Endothelial cell of umbilical vein (primary cell): ENCODE measurements at regions of chr16 and their contacts with region 1.

Region 1: DNA sequence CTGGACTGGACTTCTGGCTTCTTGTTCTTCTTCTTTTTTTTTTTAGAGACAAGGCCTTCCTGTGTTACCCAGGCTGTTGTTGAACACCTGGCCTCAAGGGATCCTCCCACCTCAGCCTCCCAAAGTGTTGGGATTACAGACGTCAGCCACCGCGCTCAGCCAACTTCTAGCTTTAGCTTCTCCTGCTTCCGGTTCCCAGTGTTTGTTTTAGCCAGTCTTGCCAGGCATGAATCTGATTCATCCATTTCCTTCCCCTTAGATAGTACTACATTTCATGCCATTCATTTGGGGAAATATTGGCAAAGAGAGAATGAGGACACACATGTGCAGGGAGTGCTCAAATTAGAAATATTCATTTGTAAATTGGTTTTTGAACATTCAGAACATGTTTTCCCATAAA is 12.1 kb upstream of the NDUFAB1 start:
- DNase-seq: peak; percentile 93
- H3K4me3 ChIP-seq: peak overlapping the region in 1 of 3 experiments; percentile 28
- H3K27ac ChIP-seq: peak overlapping the region; percentile 96
- H3K4me1 ChIP-seq: peaks cover 13% of the 10 kb centered on the region
- H3K27me3 ChIP-seq: no peaks in the 10 kb centered on the region
- CTCF ChIP-seq: no peak
- POLR2A ChIP-seq: peak; percentile 38

Region 2: GRCh38 chr16:23504451-23505179 is 103.6 kb before region 1 on chr16:
- CTCF ChIA-PET with region 1: no interaction called
- POLR2A ChIA-PET with region 1: no interaction called
- dilution Hi-C with region 1: no loop called
- intact Hi-C with region 1: no loop called
- DNase-seq: peak; percentile 87
- H3K4me3 ChIP-seq: no peak overlapping the region
- H3K27ac ChIP-seq: peak overlapping the region; percentile 64
- H3K4me1 ChIP-seq: peaks cover 20% of the 10 kb centered on the region
- H3K27me3 ChIP-seq: no peaks in the 10 kb centered on the region
- CTCF ChIP-seq: no peak
- POLR2A ChIP-seq: no peak

Region 3: GRCh38 chr16:23595951-23596720 is 12.1 kb before region 1 on chr16 and contains the start of gene NDUFAB1:
- CTCF ChIA-PET with region 1: interaction called, 12 read pairs
- POLR2A ChIA-PET with region 1: no interaction called
- dilution Hi-C with region 1: no loop called
- intact Hi-C with region 1: loop called (anchors 1 kb)
- DNase-seq: peak; percentile 90
- H3K4me3 ChIP-seq: peak within 1 kb of the TSS; percentile 77 to 89 (median 87)
- H3K27ac ChIP-seq: peak within 1 kb of the TSS; percentile 59
- H3K4me1 ChIP-seq: peaks cover 7% of the 10 kb centered on the region
- H3K27me3 ChIP-seq: no peaks in the 10 kb centered on the region
- CTCF ChIP-seq: peak; percentile 91 to 99
- POLR2A ChIP-seq: peak; percentile 83
- total RNA-seq, gene NDUFAB1: 109 and 112 TPM in 2 replicates

Region 4: DNA sequence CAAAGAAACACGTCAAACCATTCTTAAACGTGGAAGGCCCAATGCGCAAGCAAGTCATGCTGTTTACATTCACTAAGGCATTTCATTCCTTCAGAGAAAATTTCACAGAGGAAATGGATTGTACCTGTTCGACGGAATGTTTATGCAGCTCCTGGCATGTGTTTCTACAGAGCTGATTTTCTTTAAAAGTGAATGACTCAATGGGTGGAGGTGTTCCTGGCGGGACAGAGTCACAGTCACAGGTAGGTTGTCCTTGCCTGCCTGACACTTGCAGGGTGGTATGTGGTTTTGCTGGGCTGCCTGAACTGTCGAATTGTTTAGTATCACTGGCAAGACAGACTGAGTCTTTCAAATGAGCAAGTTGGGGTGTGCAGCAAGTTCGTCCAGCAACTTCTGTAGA is 21.3 kb after region 1 on chr16:
- CTCF ChIA-PET with region 1: no interaction called
- POLR2A ChIA-PET with region 1: no interaction called
- dilution Hi-C with region 1: no loop called
- intact Hi-C with region 1: no loop called
- DNase-seq: no peak
- H3K4me3 ChIP-seq: no peak overlapping the region
- H3K27ac ChIP-seq: no peak overlapping the region
- H3K4me1 ChIP-seq: no peaks in the 10 kb centered on the region
- H3K27me3 ChIP-seq: no peaks in the 10 kb centered on the region
- CTCF ChIP-seq: no peak
- POLR2A ChIP-seq: no peak

Region 5: DNA sequence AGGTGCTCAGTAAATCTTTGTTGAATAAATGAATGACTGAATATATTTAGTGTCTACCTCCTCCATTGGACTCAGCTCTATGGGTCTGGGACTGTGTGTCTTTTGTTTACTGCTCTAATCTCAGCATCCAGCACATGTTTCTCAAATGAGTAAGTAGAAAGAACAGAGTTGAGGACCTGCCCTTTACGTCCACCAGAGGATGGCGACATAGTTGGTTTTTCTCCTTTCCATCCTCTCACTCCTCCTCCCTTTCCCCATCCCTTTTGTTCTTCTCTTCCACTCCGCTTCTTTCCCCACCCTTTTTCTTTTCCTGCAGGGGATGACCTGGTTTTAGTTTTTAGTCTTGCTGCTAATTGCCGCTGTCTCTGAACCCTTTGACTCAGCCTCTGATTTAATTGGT is 134.6 kb after region 1 on chr16:
- CTCF ChIA-PET with region 1: no interaction called
- POLR2A ChIA-PET with region 1: no interaction called
- dilution Hi-C with region 1: no loop called
- intact Hi-C with region 1: no loop called
- DNase-seq: no peak
- H3K4me3 ChIP-seq: no peak overlapping the region
- H3K27ac ChIP-seq: no peak overlapping the region
- H3K4me1 ChIP-seq: no peaks in the 10 kb centered on the region
- H3K27me3 ChIP-seq: no peaks in the 10 kb centered on the region
- CTCF ChIP-seq: no peak
- POLR2A ChIP-seq: no peak

Region 6: GRCh38 chr16:24088767-24089166 is 480.6 kb after region 1 on chr16:
- CTCF ChIA-PET with region 1: no interaction called
- POLR2A ChIA-PET with region 1: no interaction called
- dilution Hi-C with region 1: no loop called
- intact Hi-C with region 1: no loop called
- DNase-seq: no peak
- H3K4me3 ChIP-seq: no peak overlapping the region
- H3K27ac ChIP-seq: no peak overlapping the region
- H3K4me1 ChIP-seq: no peaks in the 10 kb centered on the region
- H3K27me3 ChIP-seq: no peaks in the 10 kb centered on the region
- CTCF ChIP-seq: no peak
- POLR2A ChIP-seq: no peak